Activated CD8-positive, alpha-beta memory T cell treated with anti-CD3 and anti-CD28 coated beads, Interleukin-2, amount 10 ng/mL, durations not matched to agents 7 days and 5 days (primary cell): ENCODE measurements at regions of chr1 and their contacts with region 1.

Region 1: DNA sequence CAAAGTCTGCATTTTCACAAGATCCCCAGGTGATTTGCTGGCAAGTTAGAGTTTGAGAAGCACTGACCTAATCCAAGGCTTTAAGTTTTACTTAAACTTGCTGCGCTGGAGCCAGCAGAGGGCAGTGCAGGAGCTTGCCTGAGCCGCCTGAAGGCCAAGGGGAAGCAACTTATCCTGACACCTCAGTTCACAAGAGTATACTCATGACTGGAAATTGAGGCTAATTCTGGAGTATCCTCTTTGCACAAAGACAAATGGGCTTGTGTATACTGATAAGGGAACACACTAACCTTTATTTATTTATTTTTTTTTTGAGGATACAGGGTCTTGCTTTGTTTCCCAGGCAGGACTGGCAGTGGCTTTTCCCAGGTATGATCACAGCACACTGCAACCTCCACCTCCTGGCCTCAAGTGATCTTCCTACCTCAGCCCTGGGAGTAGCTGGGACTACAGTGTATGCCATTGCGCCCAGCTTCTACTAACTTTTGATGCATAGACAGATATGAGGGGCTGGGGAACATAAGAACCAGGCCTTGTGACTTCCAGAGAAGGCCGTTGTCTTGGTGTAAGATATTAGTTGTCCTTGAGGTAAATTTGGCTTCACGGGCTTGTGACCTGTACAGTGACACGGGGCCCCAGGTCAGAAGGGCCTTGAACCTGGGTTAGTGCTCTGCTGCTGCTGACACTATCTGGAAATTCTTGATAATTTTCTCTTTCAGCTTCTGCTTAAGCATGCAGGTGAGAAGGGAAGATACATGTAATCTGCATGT is 29.0 kb upstream of the SLAMF1 start:
- DNase-seq: peak; percentile 90
- ATAC-seq: peak; percentile 88
- H3K4me3 Mint-ChIP-seq: peak overlapping the region; percentile 10
- H3K27ac Mint-ChIP-seq: peak overlapping the region; percentile 58
- H3K4me1 Mint-ChIP-seq: peaks cover 37% of the 10 kb centered on the region
- H3K27me3 Mint-ChIP-seq: no peaks in the 10 kb centered on the region

Region 2: GRCh38 chr1:160070243-160071163 is 605.3 kb before region 1 on chr1:
- CTCF ChIA-PET with region 1: no interaction called
- DNase-seq: peak; percentile 74
- ATAC-seq: peak; percentile 87
- H3K4me3 Mint-ChIP-seq: peak overlapping the region; percentile 75
- H3K27ac Mint-ChIP-seq: no peak overlapping the region
- H3K4me1 Mint-ChIP-seq: peaks cover 15% of the 10 kb centered on the region
- H3K27me3 Mint-ChIP-seq: peaks cover 49% of the 10 kb centered on the region

Region 3: GRCh38 chr1:160428655-160429054 is 247.2 kb before region 1 on chr1:
- CTCF ChIA-PET with region 1: interaction called, 12 read pairs
- DNase-seq: peak; percentile 51
- ATAC-seq: peak; percentile 56
- H3K4me3 Mint-ChIP-seq: peak overlapping the region; percentile 51
- H3K27ac Mint-ChIP-seq: peak overlapping the region; percentile 83
- H3K4me1 Mint-ChIP-seq: peaks cover 55% of the 10 kb centered on the region
- H3K27me3 Mint-ChIP-seq: no peaks in the 10 kb centered on the region

Region 4: GRCh38 chr1:160618763-160619274 is 57.0 kb before region 1 on chr1:
- CTCF ChIA-PET with region 1: interaction called, 65 read pairs
- DNase-seq: peak; percentile 68
- ATAC-seq: no peak
- H3K4me3 Mint-ChIP-seq: no peak overlapping the region
- H3K27ac Mint-ChIP-seq: peak overlapping the region; percentile 66
- H3K4me1 Mint-ChIP-seq: peaks cover 71% of the 10 kb centered on the region
- H3K27me3 Mint-ChIP-seq: no peaks in the 10 kb centered on the region

Region 5: GRCh38 chr1:160664573-160665051 is 11.2 kb before region 1 on chr1:
- CTCF ChIA-PET with region 1: interaction called, 27 read pairs
- DNase-seq: peak; percentile 75
- ATAC-seq: peak; percentile 83
- H3K4me3 Mint-ChIP-seq: peak overlapping the region; percentile 70
- H3K27ac Mint-ChIP-seq: peak overlapping the region; percentile 93
- H3K4me1 Mint-ChIP-seq: peaks cover 71% of the 10 kb centered on the region
- H3K27me3 Mint-ChIP-seq: no peaks in the 10 kb centered on the region

Region 6: GRCh38 chr1:160711602-160712311 is 35.9 kb after region 1 on chr1 and contains the start of gene CD48:
- CTCF ChIA-PET with region 1: interaction called, 61 read pairs
- DNase-seq: peak; percentile 79
- ATAC-seq: peak; percentile 48
- H3K4me3 Mint-ChIP-seq: no peak within 1 kb of the TSS
- H3K27ac Mint-ChIP-seq: no peak within 1 kb of the TSS
- H3K4me1 Mint-ChIP-seq: peaks cover 27% of the 10 kb centered on the region
- H3K27me3 Mint-ChIP-seq: no peaks in the 10 kb centered on the region
- total RNA-seq, gene CD48: 304 to 332 TPM

Region 7: GRCh38 chr1:160768295-160768657 is 92.5 kb after region 1 on chr1:
- CTCF ChIA-PET with region 1: interaction called, 93 read pairs
- DNase-seq: peak; percentile 94
- ATAC-seq: peak; percentile 95
- H3K4me3 Mint-ChIP-seq: peak overlapping the region; percentile 78
- H3K27ac Mint-ChIP-seq: peak overlapping the region; percentile 91
- H3K4me1 Mint-ChIP-seq: peaks cover 32% of the 10 kb centered on the region
- H3K27me3 Mint-ChIP-seq: no peaks in the 10 kb centered on the region